H1 (cell line): ENCODE measurements at regions of chr7 and their contacts with region 1.

Region 1: GRCh38 chr7:104883718-104884452 is 130.1 kb upstream of the KMT2E start:
- DNase-seq: peak; percentile 68 to 93
- H3K4me3 ChIP-seq: no peak overlapping the region
- H3K27ac ChIP-seq: no peak overlapping the region
- H3K4me1 ChIP-seq: peaks cover 0 to 2% (median 0%) of the 10 kb centered on the region in 4 experiments; a peak in 2 of 7 replicates
- H3K27me3 ChIP-seq: peaks cover 0 to 2% (median 0%) of the 10 kb centered on the region in 4 experiments; a peak in 2 of 7 replicates
- CTCF ChIP-seq: peak; percentile 87 to 97 (median 94)
- EP300 ChIP-seq: no peak
- POLR2A ChIP-seq: no peak
- RAD21 ChIP-seq: peak; percentile 70 to 77

Region 2: GRCh38 chr7:104873346-104873849 is 10.5 kb before region 1 on chr7:
- CTCF ChIA-PET with region 1: interaction called, 18 read pairs
- POLR2A ChIA-PET with region 1: interaction called, 3 read pairs
- DNase-seq: no peak
- H3K4me3 ChIP-seq: no peak overlapping the region
- H3K27ac ChIP-seq: no peak overlapping the region
- H3K4me1 ChIP-seq: no peaks in the 10 kb centered on the region
- H3K27me3 ChIP-seq: no peaks in the 10 kb centered on the region
- CTCF ChIP-seq: no peak
- EP300 ChIP-seq: no peak
- POLR2A ChIP-seq: no peak
- RAD21 ChIP-seq: no peak

Region 3: DNA sequence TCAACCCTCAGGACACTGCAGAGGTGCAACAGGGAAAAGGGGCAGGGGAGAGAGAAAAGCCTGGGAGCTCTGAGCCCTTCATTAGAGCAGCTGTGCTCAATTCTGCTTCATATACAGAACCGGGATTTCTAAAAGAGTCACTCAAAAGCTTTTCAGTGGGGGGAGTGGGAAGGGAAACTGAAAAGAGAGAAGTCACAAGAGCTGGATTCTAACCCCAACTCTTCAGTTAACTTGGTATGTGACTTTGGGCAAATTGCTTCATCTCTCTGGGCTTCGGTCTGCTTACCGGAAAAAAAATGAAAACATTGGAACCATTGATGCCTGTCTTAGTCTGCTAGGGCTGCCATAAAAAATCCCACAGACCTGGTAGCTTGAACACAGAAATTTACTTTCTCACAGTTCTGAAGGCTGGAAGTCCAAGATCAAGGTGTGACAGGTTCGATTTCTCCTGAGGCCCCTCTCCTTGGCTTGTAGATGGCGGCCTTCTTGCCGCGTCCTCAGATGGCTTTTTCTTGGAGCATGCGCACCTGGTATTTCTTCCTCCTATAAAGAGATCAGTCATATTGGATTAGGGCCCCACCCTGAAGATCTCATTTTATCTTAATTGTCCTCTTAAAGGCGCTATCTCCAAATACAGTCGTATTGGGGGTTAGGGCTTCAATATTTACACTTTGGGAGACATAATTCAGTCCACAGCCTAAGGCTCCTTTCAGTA is 11.8 kb after region 1 on chr7:
- CTCF ChIA-PET with region 1: interaction called, 83 read pairs
- POLR2A ChIA-PET with region 1: no interaction called
- DNase-seq: no peak
- H3K4me3 ChIP-seq: no peak overlapping the region
- H3K27ac ChIP-seq: no peak overlapping the region
- H3K4me1 ChIP-seq: no peaks in the 10 kb centered on the region
- H3K27me3 ChIP-seq: no peaks in the 10 kb centered on the region; a peak in 1 of 7 replicates
- CTCF ChIP-seq: no peak
- EP300 ChIP-seq: no peak
- POLR2A ChIP-seq: no peak
- RAD21 ChIP-seq: no peak

Region 4: GRCh38 chr7:104908636-104909035 is 24.8 kb after region 1 on chr7:
- CTCF ChIA-PET with region 1: interaction called, 83 read pairs
- POLR2A ChIA-PET with region 1: no interaction called
- DNase-seq: no peak
- H3K4me3 ChIP-seq: no peak overlapping the region
- H3K27ac ChIP-seq: no peak overlapping the region
- H3K4me1 ChIP-seq: no peaks in the 10 kb centered on the region
- H3K27me3 ChIP-seq: no peaks in the 10 kb centered on the region
- CTCF ChIP-seq: no peak
- EP300 ChIP-seq: no peak
- POLR2A ChIP-seq: no peak
- RAD21 ChIP-seq: no peak

Region 5: DNA sequence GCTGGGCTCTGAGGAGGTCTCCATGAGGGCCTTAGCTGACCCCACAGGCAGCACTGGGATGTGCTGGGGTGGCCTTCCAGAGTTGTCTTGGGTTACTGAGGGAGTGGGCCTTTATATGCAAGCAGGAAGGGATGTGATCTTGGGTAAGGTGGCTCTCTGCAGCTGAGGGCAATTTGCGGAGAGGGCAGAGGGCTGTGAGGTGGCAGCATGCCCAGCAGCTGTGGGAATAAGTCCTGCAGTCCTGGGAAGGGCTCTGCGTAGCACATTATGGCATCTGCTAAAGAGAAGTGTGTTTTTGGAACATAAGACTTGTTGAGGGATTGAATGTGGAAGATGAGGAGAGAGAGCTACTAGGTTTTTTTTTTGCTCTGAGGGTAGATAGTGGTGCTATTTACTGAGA is 30.5 kb after region 1 on chr7:
- CTCF ChIA-PET with region 1: interaction called, 83 read pairs
- POLR2A ChIA-PET with region 1: no interaction called
- DNase-seq: no peak
- H3K4me3 ChIP-seq: no peak overlapping the region
- H3K27ac ChIP-seq: no peak overlapping the region
- H3K4me1 ChIP-seq: no peaks in the 10 kb centered on the region; a peak in 1 of 7 replicates
- H3K27me3 ChIP-seq: no peaks in the 10 kb centered on the region
- CTCF ChIP-seq: no peak
- EP300 ChIP-seq: no peak
- POLR2A ChIP-seq: no peak
- RAD21 ChIP-seq: no peak

Region 6: DNA sequence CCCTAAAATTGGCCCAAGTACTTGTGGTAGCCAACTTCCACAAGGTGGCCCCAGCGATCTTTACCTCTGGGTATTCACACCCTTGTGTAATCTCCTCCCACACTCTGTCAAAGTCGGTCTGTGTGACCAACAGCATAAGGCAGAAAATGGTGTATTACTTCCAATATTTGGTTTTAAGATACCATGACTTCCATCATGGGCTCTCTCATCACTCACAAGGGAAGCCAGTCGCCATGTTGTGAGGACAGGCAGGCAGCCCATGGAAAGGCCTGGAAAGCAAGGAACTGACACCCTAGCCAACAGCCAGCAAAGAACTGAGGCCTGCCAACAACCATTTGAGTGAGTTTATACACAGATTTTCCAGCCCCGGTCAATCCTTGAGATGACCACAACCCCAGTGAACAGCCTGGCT is 39.1 kb after region 1 on chr7:
- CTCF ChIA-PET with region 1: interaction called, 83 read pairs
- POLR2A ChIA-PET with region 1: no interaction called
- DNase-seq: peak; percentile 41 to 63
- H3K4me3 ChIP-seq: no peak overlapping the region
- H3K27ac ChIP-seq: no peak overlapping the region
- H3K4me1 ChIP-seq: no peaks in the 10 kb centered on the region; a peak in 1 of 7 replicates
- H3K27me3 ChIP-seq: no peaks in the 10 kb centered on the region
- CTCF ChIP-seq: peak; percentile 57 to 87 (median 73)
- EP300 ChIP-seq: no peak
- POLR2A ChIP-seq: no peak
- RAD21 ChIP-seq: peak; percentile 96 to 97